ENCODE measurements at regions of chr12 and their contacts with region 1.

Region 1: DNA sequence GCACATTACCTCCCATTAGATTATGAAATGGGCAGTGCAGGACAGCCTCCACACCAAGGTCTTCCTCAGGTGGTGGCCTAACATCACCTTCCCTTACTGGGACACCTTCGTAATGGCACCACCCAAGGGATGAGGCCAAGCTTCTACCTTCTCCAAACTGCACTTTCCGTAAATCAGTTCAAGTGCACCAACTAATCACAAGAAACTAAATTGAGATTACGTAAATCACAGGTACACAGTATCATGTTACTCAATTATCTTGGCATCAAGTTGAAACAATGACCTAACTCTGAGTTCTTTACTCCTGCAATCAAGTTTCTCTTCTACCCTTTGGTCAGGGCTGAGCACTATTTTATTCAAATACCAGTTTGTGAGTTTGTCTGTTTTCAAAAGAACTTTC is 13.8 kb downstream of the SLC41A2 start:
- DNase-seq: no peak
- ATAC-seq: peak; percentile 87 to 92 (median 88)
- H3K4me3 ChIP-seq: no peak overlapping the region
- H3K27ac ChIP-seq: peak overlapping the region in 1 of 4 donors; percentile 14
- H3K4me1 ChIP-seq: peaks cover 0 to 7% (median 6%) of the 10 kb centered on the region in 3 donors
- H3K27me3 ChIP-seq: no peaks in the 10 kb centered on the region
- CTCF ChIP-seq: no peak

Region 2: GRCh38 chr12:104890476-104891096 is 53.7 kb before region 1 on chr12:
- intact Hi-C with region 1: loop called in 1 of 3 experiments (anchors 10 kb)
- DNase-seq: no peak
- ATAC-seq: no peak
- H3K4me3 ChIP-seq: no peak overlapping the region
- H3K27ac ChIP-seq: no peak overlapping the region
- H3K4me1 ChIP-seq: peaks cover 24 to 39% (median 32%) of the 10 kb centered on the region in 3 donors
- H3K27me3 ChIP-seq: no peaks in the 10 kb centered on the region
- CTCF ChIP-seq: no peak